Naive thymus-derived CD4-positive, alpha-beta T cell (primary cell): ENCODE measurements at regions of chr19 and their contacts with region 1.

Region 1: DNA sequence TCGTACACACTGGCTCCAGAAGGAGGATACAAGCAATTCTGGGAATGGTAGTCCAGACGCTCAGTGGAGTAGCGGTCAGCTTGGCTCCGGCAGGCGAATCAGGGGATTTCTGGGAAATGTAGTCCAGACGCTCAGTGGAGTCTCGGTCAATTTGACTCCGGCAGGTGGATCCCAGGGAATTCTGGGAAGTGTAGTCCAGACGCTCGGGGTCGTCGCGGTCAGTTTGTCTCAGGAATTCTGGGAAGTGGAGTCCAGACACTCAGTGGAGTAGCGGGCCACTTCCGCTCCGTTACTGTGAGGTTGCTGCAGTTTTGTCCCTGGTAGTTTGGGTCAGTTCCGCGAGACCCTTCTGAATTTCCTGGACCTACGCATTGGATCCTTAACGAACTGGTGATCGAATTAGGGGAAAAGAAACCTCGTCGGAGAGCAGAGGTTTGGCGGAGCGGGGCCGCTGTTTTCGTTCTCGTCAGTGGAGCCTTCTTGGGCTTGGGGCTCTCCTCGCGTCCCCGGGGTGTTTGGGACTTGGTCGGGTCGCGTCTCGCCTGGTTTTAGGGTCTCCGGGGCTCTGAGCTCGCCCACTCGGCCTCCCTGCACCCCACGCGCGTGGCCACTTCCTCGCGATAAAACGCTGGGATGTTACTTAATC is at the start of gene ZNF225:
- DNase-seq: peak; percentile 41 to 84 (median 76)
- ATAC-seq: peak; percentile 100
- H3K4me3 ChIP-seq: peak within 1 kb of the TSS; percentile 89
- H3K4me3 Mint-ChIP-seq: peak within 1 kb of the TSS; percentile 95 to 100 (median 99)
- H3K27ac ChIP-seq: peak within 1 kb of the TSS; percentile 68
- H3K27ac Mint-ChIP-seq: peak within 1 kb of the TSS; percentile 82 to 97 (median 88)
- H3K4me1 ChIP-seq: peaks cover 3 to 8% of the 10 kb centered on the region in 2 donors
- H3K4me1 Mint-ChIP-seq: peaks cover 16 to 38% (median 31%) of the 10 kb centered on the region in 7 donors
- H3K27me3 ChIP-seq: no peaks in the 10 kb centered on the region
- H3K27me3 Mint-ChIP-seq: no peaks in the 10 kb centered on the region
- total RNA-seq, gene ZNF225: 0.69 to 13.0 (median 5.1) TPM

Region 2: GRCh38 chr19:43765109-43765876 is 348.0 kb before region 1 on chr19:
- CTCF ChIA-PET with region 1: no interaction called
- POLR2A ChIA-PET with region 1: no interaction called
- intact Hi-C with region 1: no loop called
- DNase-seq: peak in 8 of 9 donors; percentile 20 to 86 (median 38)
- ATAC-seq: peak; percentile 81
- H3K4me3 ChIP-seq: no peak overlapping the region
- H3K4me3 Mint-ChIP-seq: peak overlapping the region; percentile 35 to 80 (median 67)
- H3K27ac ChIP-seq: peak overlapping the region; percentile 45
- H3K27ac Mint-ChIP-seq: peak overlapping the region; percentile 78 to 94 (median 88)
- H3K4me1 ChIP-seq: peaks cover 23 to 32% of the 10 kb centered on the region in 2 donors
- H3K4me1 Mint-ChIP-seq: peaks cover 32 to 73% (median 40%) of the 10 kb centered on the region in 7 donors
- H3K27me3 ChIP-seq: no peaks in the 10 kb centered on the region
- H3K27me3 Mint-ChIP-seq: no peaks in the 10 kb centered on the region

Region 3: DNA sequence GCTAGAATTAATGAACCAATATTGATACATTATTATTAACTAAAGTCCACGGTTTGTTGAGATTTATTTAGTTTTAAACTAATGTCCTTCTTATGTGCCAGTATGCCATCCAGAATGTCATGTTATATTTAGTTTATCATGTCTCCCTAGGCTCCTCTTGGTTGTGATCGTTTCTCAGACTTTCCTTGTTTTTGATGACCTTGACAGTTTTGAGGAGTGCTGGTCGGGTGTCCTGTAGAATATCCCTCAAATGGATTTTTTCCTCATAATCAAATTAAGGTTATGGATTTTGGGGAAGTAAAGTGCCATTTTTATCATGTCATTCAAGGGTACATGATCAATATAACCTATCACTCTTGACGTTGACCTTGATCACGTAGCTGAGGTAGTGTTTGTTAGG is 172.1 kb before region 1 on chr19:
- CTCF ChIA-PET with region 1: no interaction called
- POLR2A ChIA-PET with region 1: no interaction called
- intact Hi-C with region 1: no loop called
- DNase-seq: no peak
- ATAC-seq: no peak
- H3K4me3 ChIP-seq: no peak overlapping the region
- H3K4me3 Mint-ChIP-seq: no peak overlapping the region
- H3K27ac ChIP-seq: no peak overlapping the region
- H3K27ac Mint-ChIP-seq: no peak overlapping the region
- H3K4me1 ChIP-seq: no peaks in the 10 kb centered on the region
- H3K4me1 Mint-ChIP-seq: peaks cover 0 to 4% (median 0%) of the 10 kb centered on the region in 7 donors
- H3K27me3 ChIP-seq: no peaks in the 10 kb centered on the region
- H3K27me3 Mint-ChIP-seq: peaks cover 0 to 43% (median 15%) of the 10 kb centered on the region in 5 donors

Region 4: DNA sequence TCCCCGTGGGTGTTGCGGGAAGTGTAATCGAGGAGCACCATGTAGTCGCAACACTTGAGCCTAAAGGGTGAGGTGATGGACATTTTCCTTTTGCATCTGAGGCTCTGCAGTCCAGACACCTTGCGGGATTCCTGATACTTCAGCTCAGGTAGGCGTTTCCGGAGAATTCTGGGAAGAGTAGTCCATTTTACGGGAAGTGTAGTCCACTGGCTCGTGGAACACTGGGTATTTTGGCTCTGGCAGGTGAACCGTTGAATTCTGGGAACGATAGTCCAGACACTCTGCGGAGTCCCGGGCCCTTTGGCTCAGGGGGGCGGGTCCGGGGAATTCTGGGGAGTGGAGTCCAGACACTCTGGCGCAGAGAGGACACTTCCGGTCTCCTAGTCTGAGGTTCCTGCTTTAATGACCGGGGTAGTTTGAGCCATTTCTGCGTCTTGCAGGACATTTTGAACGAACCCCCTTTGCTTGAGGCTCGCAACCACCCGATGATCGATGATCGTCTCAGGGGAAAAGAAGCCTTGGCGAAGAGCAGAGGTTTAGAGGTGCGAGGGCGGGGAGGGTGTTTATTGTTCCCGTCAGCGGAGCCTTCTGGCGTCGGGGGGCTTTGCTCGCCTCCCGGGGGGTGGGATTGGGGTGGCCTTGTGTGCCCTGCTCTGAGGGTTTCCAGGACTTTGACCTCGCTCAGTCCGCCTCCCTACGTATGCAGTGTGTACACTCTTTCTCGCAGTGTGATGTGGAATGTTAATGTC is 61.4 kb before region 1 on chr19 and contains the start of gene ZNF223:
- CTCF ChIA-PET with region 1: no interaction called
- POLR2A ChIA-PET with region 1: no interaction called
- intact Hi-C with region 1: loop called in 1 of 2 experiments (anchors 1 kb)
- DNase-seq: peak in 8 of 9 donors; percentile 14 to 52 (median 40)
- ATAC-seq: peak; percentile 85
- H3K4me3 ChIP-seq: peak within 1 kb of the TSS; percentile 58
- H3K4me3 Mint-ChIP-seq: peak within 1 kb of the TSS; percentile 71 to 98 (median 96)
- H3K27ac ChIP-seq: peak within 1 kb of the TSS; percentile 53
- H3K27ac Mint-ChIP-seq: peak within 1 kb of the TSS in 8 of 9 donors; percentile 36 to 91 (median 82)
- H3K4me1 ChIP-seq: no peaks in the 10 kb centered on the region
- H3K4me1 Mint-ChIP-seq: peaks cover 7 to 36% (median 28%) of the 10 kb centered on the region in 7 donors
- H3K27me3 ChIP-seq: no peaks in the 10 kb centered on the region
- H3K27me3 Mint-ChIP-seq: peaks cover 0 to 22% (median 13%) of the 10 kb centered on the region in 5 donors
- total RNA-seq, gene ZNF223: 0.15 to 8.7 (median 2.3) TPM

Region 5: DNA sequence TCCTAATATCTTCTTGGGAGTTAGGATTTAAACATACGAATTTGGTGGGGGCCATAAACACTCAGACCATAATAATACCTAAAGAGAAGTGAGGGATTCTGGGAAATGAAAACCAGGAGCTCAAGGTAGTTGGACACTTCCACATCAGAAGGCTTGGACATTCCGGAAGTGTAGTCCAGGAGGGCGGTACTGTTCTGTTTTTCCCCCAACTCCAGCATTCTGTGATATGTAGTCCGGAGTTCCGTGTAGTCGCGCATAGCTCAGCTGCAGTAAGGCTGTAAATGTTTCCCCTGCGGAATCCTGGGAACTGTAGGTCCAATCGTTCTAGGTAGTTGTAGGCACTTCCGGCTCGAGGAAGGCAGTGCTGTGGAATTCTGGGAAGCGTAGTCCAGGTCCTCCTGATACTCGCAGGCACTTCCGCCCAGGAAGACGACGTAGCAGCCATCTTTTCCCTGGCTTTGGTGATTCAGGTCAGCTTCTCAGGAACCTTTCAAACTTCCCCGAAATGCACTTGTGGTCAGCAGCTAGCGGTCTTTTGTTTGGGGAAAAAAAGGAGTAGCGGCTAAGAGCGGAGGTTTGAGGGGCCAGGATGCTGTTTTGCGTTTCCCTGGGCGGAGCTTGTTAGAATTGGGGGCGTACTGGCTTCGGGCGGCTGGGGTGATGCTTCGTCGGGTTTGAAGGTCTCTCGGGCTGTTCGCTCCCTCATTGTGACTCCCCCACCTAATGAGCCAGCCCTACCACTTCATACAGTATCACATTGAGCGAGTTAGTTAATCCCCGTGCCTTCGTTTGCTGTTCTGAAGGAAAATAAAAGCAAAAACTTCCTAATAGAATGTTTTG is 51.6 kb after region 1 on chr19 and contains the start of gene ZNF226:
- CTCF ChIA-PET with region 1: no interaction called
- POLR2A ChIA-PET with region 1: interaction called, 4 read pairs
- intact Hi-C with region 1: loop called (anchors 1 kb)
- DNase-seq: peak; percentile 24 to 83 (median 75)
- ATAC-seq: peak; percentile 97
- H3K4me3 ChIP-seq: peak within 1 kb of the TSS; percentile 87
- H3K4me3 Mint-ChIP-seq: peak within 1 kb of the TSS; percentile 97 to 99 (median 98)
- H3K27ac ChIP-seq: peak within 1 kb of the TSS; percentile 78
- H3K27ac Mint-ChIP-seq: peak within 1 kb of the TSS; percentile 84 to 99 (median 97)
- H3K4me1 ChIP-seq: peaks cover 6 to 9% of the 10 kb centered on the region in 2 donors
- H3K4me1 Mint-ChIP-seq: peaks cover 10 to 40% (median 40%) of the 10 kb centered on the region in 7 donors
- H3K27me3 ChIP-seq: no peaks in the 10 kb centered on the region
- H3K27me3 Mint-ChIP-seq: no peaks in the 10 kb centered on the region
- total RNA-seq, gene ZNF226: 14.0 to 59.9 (median 20.3) TPM

Region 6: GRCh38 chr19:44212250-44212865 is 99.1 kb after region 1 on chr19 and contains the start of gene ZNF227:
- CTCF ChIA-PET with region 1: no interaction called
- POLR2A ChIA-PET with region 1: interaction called, 4 read pairs
- intact Hi-C with region 1: loop called (anchors 1 kb)
- DNase-seq: peak; percentile 47 to 80 (median 75)
- ATAC-seq: peak; percentile 98
- H3K4me3 ChIP-seq: peak within 1 kb of the TSS; percentile 98
- H3K4me3 Mint-ChIP-seq: peak within 1 kb of the TSS; percentile 85 to 100 (median 96)
- H3K27ac ChIP-seq: peak within 1 kb of the TSS; percentile 81
- H3K27ac Mint-ChIP-seq: peak within 1 kb of the TSS; percentile 82 to 97 (median 92)
- H3K4me1 ChIP-seq: peaks cover 0 to 15% of the 10 kb centered on the region in 2 donors
- H3K4me1 Mint-ChIP-seq: peaks cover 19 to 45% (median 31%) of the 10 kb centered on the region in 7 donors
- H3K27me3 ChIP-seq: no peaks in the 10 kb centered on the region
- H3K27me3 Mint-ChIP-seq: peaks cover 0 to 4% (median 0%) of the 10 kb centered on the region in 5 donors
- total RNA-seq, gene ZNF227: 18.3 to 51.5 (median 30.0) TPM

Region 7: GRCh38 chr19:44500148-44500956 is 387.1 kb after region 1 on chr19 and contains the start of gene ZNF180:
- CTCF ChIA-PET with region 1: no interaction called
- POLR2A ChIA-PET with region 1: no interaction called
- intact Hi-C with region 1: loop called in 1 of 2 experiments (anchors 1 kb)
- DNase-seq: peak; percentile 89 to 96 (median 93)
- ATAC-seq: peak; percentile 96
- H3K4me3 ChIP-seq: peak within 1 kb of the TSS; percentile 100
- H3K4me3 Mint-ChIP-seq: peak within 1 kb of the TSS; percentile 91 to 98 (median 96)
- H3K27ac ChIP-seq: peak within 1 kb of the TSS; percentile 84
- H3K27ac Mint-ChIP-seq: peak within 1 kb of the TSS; percentile 82 to 94 (median 92)
- H3K4me1 ChIP-seq: peaks cover 13 to 19% of the 10 kb centered on the region in 2 donors
- H3K4me1 Mint-ChIP-seq: peaks cover 29 to 45% (median 34%) of the 10 kb centered on the region in 7 donors
- H3K27me3 ChIP-seq: peaks cover 0 to 2% of the 10 kb centered on the region in 2 donors
- H3K27me3 Mint-ChIP-seq: peaks cover 7 to 18% (median 13%) of the 10 kb centered on the region in 5 donors
- total RNA-seq, gene ZNF180: 7.5 to 17.7 (median 10.6) TPM